RWPE1 (cell line): ENCODE measurements at regions of chr11 and their contacts with region 1.

Region 1: GRCh38 chr11:41081756-41082285 is 377.6 kb downstream of the LRRC4C start:
- DNase-seq: no peak
- H3K27ac ChIP-seq: no peak overlapping the region
- CTCF ChIP-seq: no peak

Region 2: DNA sequence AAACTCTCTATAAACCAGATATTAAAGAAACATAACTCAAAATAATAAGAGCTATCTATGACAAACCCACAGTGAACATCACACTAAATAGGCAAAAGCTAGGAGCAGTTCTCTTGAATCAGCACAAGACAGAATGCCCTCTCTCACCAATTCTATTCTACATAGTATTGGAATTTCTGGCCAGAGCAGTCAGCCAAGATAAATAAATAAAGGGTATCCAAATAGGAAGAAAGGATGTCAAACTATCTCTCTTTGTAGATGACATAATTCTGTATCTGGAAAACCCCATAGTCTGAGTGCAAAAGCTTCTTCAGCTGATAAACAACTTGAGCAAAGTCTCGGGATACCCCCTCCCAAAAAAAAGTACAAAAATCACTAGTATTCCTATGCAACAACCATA is 17.8 kb after region 1 on chr11:
- CTCF ChIA-PET with region 1: interaction called, 7 read pairs
- POLR2A ChIA-PET with region 1: interaction called, 10 read pairs
- DNase-seq: no peak
- H3K27ac ChIP-seq: no peak overlapping the region
- CTCF ChIP-seq: no peak

Region 3: DNA sequence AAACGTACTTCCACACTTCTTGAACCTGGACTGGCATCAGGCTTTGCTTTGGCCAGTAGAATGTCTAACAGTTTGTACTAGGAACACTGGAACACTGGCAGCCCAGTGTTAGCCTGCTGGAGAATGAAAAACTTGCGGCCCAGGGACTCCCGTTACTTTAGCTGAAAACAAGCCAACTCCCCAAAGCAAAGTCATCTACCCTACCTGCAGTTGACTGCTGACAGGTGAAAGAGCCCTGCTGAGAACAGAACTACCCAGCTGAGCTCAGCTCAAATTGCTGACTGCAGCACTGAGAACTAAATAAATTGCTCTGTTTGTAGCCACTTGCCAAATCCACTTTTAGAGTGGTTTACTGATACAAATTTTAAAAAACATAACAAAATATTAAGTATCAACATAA is 35.1 kb after region 1 on chr11:
- CTCF ChIA-PET with region 1: no interaction called
- POLR2A ChIA-PET with region 1: no interaction called
- DNase-seq: no peak
- H3K27ac ChIP-seq: no peak overlapping the region
- CTCF ChIP-seq: no peak

Region 4: GRCh38 chr11:41146326-41146725 is 64.5 kb after region 1 on chr11:
- CTCF ChIA-PET with region 1: no interaction called
- POLR2A ChIA-PET with region 1: no interaction called
- DNase-seq: no peak
- H3K27ac ChIP-seq: no peak overlapping the region
- CTCF ChIP-seq: no peak